Lower leg skin (tissue), 4 donors: ENCODE measurements at regions of chr18 and their contacts with region 1.

Region 1: DNA sequence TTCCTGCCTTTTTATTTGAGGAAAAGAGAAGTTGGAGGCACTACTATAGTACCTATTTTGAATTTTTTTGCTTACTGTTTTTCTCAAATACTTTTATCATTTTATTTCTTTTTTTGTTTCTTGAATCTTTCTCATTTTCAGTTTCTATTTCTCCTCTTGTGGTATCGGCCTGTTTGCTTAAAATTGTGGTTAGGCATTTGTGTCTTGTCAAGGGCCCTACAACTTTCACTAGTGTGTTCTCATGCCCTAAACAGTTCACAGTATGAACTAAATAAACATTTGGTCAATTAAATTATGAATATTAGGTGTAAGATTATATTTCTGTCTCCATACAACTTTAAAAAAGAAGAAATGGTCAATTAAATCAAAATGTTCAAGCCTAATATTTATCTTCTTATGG is 613.5 kb downstream of the MBD2 start:
- DNase-seq: no peak
- H3K4me3 ChIP-seq: no peak overlapping the region
- CTCF ChIP-seq: no peak
- POLR2A ChIP-seq: no peak

Region 2: GRCh38 chr18:52489396-52490306 is 1121.3 kb before region 1 on chr18:
- intact Hi-C with region 1: loop called (anchors 5 kb)
- DNase-seq: no peak
- H3K4me3 ChIP-seq: no peak overlapping the region
- CTCF ChIP-seq: no peak
- POLR2A ChIP-seq: no peak